ENCODE measurements at regions of chr4 and their contacts with region 1.

Region 1: GRCh38 chr4:153649572-153649991 is 34.5 kb upstream of the TLR2 start:
- DNase-seq: no peak
- ATAC-seq: no peak
- H3K4me3 ChIP-seq: no peak overlapping the region
- H3K27ac ChIP-seq: no peak overlapping the region
- H3K4me1 ChIP-seq: peaks cover 4 to 5% of the 10 kb centered on the region in 2 donors
- H3K27me3 ChIP-seq: no peaks in the 10 kb centered on the region

Region 2: DNA sequence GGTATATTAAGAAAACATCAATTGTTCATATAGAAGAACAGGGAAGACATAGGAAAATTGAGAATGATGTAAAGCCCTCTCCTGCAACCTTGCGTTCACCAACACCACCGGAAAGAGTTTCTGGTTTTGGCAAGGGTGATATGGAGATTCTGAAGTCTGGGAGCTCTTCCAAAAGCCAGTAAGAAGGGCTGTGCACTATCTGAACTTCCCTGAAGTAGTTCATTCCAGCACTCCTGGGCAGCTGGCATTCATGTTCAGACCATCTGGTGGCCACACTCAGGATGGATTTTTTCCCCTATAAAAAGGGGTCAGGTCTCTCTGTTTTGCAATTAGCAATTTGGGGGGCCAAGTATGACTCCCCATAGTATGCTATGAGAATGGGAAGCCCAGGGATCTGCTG is 19.1 kb after region 1 on chr4:
- intact Hi-C with region 1: loop called in 1 of 2 experiments (anchors 1 kb)
- DNase-seq: no peak
- ATAC-seq: no peak
- H3K4me3 ChIP-seq: no peak overlapping the region
- H3K27ac ChIP-seq: no peak overlapping the region
- H3K4me1 ChIP-seq: peaks cover 0 to 2% of the 10 kb centered on the region in 2 donors
- H3K27me3 ChIP-seq: no peaks in the 10 kb centered on the region

Region 3: GRCh38 chr4:153684182-153684970 is 34.8 kb after region 1 on chr4 and contains the start of gene TLR2:
- intact Hi-C with region 1: loop called (anchors 5 kb)
- DNase-seq: peak; percentile 91 to 92
- ATAC-seq: peak; percentile 92
- H3K4me3 ChIP-seq: peak within 1 kb of the TSS; percentile 31 to 65
- H3K27ac ChIP-seq: no peak within 1 kb of the TSS
- H3K4me1 ChIP-seq: no peaks in the 10 kb centered on the region
- H3K27me3 ChIP-seq: no peaks in the 10 kb centered on the region
- total RNA-seq, gene TLR2: 49.9 to 55.7 TPM

Region 4: DNA sequence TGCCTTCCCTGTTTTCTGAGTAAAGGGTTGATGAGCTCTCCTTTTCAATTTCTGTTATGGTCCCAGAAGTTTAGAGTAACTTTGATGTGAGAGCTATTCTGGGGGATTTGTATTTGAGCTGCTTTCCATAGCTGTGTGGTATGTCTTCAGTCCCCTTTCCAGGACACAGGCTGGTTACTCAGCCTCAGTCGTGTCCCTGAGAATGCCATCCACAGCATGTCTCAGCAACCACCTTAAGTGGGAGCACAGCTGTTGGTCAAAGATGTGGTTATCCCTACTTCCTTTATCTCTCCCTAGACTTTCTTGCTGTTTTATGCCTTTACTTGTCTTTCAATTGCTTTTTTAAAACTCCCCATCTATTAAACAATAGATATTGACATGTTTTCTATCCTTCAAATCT is 72.5 kb after region 1 on chr4:
- intact Hi-C with region 1: no loop called
- DNase-seq: no peak
- ATAC-seq: no peak
- H3K4me3 ChIP-seq: no peak overlapping the region
- H3K27ac ChIP-seq: no peak overlapping the region
- H3K4me1 ChIP-seq: no peaks in the 10 kb centered on the region
- H3K27me3 ChIP-seq: no peaks in the 10 kb centered on the region

Measured in aorta (tissue), 5 donors.